ENCODE measurements at regions of chr21 and their contacts with region 1.

Region 1: GRCh38 chr21:38819714-38820183 is 14.0 kb downstream of the ETS2 start:
- DNase-seq: no peak
- H3K4me3 ChIP-seq: no peak overlapping the region
- H3K27ac ChIP-seq: peak overlapping the region; percentile 65 to 81 (median 80)
- H3K4me1 ChIP-seq: peaks cover 42 to 70% (median 61%) of the 10 kb centered on the region in 4 donors
- H3K27me3 ChIP-seq: no peaks in the 10 kb centered on the region
- CTCF ChIP-seq: no peak
- EP300 ChIP-seq: no peak
- POLR2A ChIP-seq: no peak

Region 2: GRCh38 chr21:38596264-38597042 is 223.3 kb before region 1 on chr21:
- intact Hi-C with region 1: no loop called
- DNase-seq: no peak
- H3K4me3 ChIP-seq: no peak overlapping the region
- H3K27ac ChIP-seq: no peak overlapping the region
- H3K4me1 ChIP-seq: no peaks in the 10 kb centered on the region
- H3K27me3 ChIP-seq: peaks cover 0 to 58% (median 0%) of the 10 kb centered on the region in 4 donors
- CTCF ChIP-seq: no peak
- EP300 ChIP-seq: no peak
- POLR2A ChIP-seq: no peak

Region 3: DNA sequence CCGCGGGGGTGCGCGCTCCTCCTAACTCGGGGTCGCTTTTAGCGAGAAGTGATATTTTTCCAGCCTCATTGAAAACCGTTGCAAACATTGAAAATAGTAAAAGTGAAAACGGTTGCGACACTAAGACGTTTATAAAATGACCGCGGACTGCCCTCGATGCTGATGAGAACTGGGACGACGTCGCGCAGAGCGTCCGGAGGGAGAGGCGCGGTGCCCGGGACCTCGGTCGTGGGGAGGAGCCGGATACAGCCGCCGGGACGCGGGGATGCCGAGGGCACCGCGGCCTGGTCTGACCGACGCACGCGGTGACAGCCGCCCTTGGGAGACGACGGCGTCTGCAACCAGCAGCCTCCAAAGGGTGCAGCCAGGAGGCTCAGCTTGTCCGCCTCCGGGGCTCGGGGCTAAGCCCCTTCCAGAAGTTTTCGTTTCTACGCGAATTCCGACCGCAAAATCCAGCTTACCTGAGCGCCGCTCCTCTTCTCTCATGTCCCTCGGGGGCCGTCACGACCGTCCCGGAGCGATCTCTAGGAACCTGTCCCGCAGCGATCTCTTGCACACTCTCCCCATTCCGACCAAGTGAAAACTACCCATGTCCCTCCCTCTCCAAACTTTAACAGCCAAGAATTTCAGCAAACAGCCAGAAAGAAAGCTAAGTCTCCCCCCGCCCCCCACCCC is 158.4 kb before region 1 on chr21:
- intact Hi-C with region 1: no loop called
- DNase-seq: no peak
- H3K4me3 ChIP-seq: peak overlapping the region; percentile 50 to 65 (median 51)
- H3K27ac ChIP-seq: peak overlapping the region in 1 of 4 donors; percentile 44
- H3K4me1 ChIP-seq: peaks cover 14 to 21% (median 18%) of the 10 kb centered on the region in 4 donors
- H3K27me3 ChIP-seq: peaks cover 8 to 70% (median 26%) of the 10 kb centered on the region in 4 donors
- CTCF ChIP-seq: no peak
- EP300 ChIP-seq: no peak
- POLR2A ChIP-seq: no peak

Region 4: GRCh38 chr21:38920631-38921398 is 101.1 kb after region 1 on chr21:
- intact Hi-C with region 1: loop called (anchors 5 kb)
- DNase-seq: no peak
- H3K4me3 ChIP-seq: peak overlapping the region in 1 of 4 donors; percentile 8
- H3K27ac ChIP-seq: peak overlapping the region; percentile 44 to 85 (median 76)
- H3K4me1 ChIP-seq: peaks cover 21 to 35% (median 26%) of the 10 kb centered on the region in 4 donors
- H3K27me3 ChIP-seq: no peaks in the 10 kb centered on the region
- CTCF ChIP-seq: no peak
- EP300 ChIP-seq: no peak
- POLR2A ChIP-seq: no peak